HCT116 (cell line): ENCODE measurements at regions of chr15 and their contacts with region 1.

Region 1: GRCh38 chr15:40274350-40275274 is 8.3 kb downstream of the ANKRD63 start:
- DNase-seq: peak; percentile 56
- ATAC-seq: peak; percentile 63
- H3K4me3 ChIP-seq: no peak overlapping the region
- H3K27ac ChIP-seq: no peak overlapping the region
- H3K4me1 ChIP-seq: peaks cover 0 to 3% of the 10 kb centered on the region in 2 experiments; a peak in 1 of 4 replicates
- H3K27me3 ChIP-seq: no peaks in the 10 kb centered on the region
- CTCF ChIP-seq: peak; percentile 100
- POLR2A ChIP-seq: no peak
- RAD21 ChIP-seq: peak; percentile 97

Region 2: DNA sequence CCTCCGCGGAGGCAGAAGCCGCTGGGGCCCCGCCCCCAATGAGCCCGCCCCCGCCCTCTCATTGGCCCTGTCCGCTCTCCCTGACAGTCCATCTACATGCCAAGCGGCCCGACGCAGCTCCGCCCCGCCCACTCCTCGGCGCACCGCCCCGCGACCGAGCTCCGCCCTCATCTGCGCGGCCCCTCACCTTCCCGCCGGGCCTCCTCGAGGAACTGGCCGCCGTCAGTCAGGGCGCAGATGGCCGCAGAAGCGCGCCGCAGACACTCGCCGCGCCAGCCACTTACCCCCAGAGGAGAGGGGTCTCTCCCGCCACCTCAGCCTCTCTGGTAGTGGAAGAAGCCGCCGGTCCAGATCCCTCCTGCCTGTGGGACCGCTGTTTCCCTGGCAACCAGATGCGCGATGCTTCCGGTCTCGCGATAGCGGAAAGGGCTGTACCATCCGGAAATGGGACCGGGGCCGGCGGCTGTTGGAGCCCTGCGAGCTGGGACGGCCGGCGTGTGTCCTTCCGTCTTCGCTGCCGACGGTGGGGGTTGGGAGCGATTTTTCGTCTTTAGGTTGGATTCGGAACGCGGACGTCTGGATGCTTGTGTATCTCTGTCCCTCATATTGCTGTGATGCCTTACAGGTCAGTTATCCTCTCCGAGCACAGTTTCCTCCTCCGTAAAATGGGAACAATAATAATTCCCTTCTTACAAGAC is 492.0 kb before region 1 on chr15 and contains the start of gene FSIP1:
- CTCF ChIA-PET with region 1: interaction called, 7 read pairs
- POLR2A ChIA-PET with region 1: no interaction called
- RAD21 ChIA-PET with region 1: no interaction called
- intact Hi-C with region 1: loop called (anchors 10 kb)
- DNase-seq: peak; percentile 92
- ATAC-seq: peak; percentile 99
- H3K4me3 ChIP-seq: peak within 1 kb of the TSS; percentile 75 to 80
- H3K27ac ChIP-seq: peak within 1 kb of the TSS; percentile 47
- H3K4me1 ChIP-seq: peaks cover 23% of the 10 kb centered on the region in 2 experiments
- H3K27me3 ChIP-seq: no peaks in the 10 kb centered on the region
- CTCF ChIP-seq: no peak
- POLR2A ChIP-seq: no peak
- RAD21 ChIP-seq: no peak
- total RNA-seq, gene FSIP1: 0.42 TPM

Region 3: GRCh38 chr15:40217159-40217824 is 57.3 kb before region 1 on chr15:
- CTCF ChIA-PET with region 1: interaction called, 194 read pairs
- POLR2A ChIA-PET with region 1: interaction called, 4 read pairs
- RAD21 ChIA-PET with region 1: interaction called, 10 to 19 read pairs
- intact Hi-C with region 1: loop called (anchors 1 kb)
- DNase-seq: peak; percentile 68
- ATAC-seq: peak; percentile 99
- H3K4me3 ChIP-seq: no peak overlapping the region
- H3K27ac ChIP-seq: peak overlapping the region; percentile 32; the same call in 1 of the 2 replicates
- H3K4me1 ChIP-seq: 0 out of 4 replicates have a peak, but pooled peaks cover 0 to 3% of the 10 kb centered on the region in 2 experiments
- H3K27me3 ChIP-seq: no peaks in the 10 kb centered on the region
- CTCF ChIP-seq: peak; percentile 65 to 99 (median 86)
- POLR2A ChIP-seq: no peak
- RAD21 ChIP-seq: peak; percentile 91

Region 4: GRCh38 chr15:40285151-40285550 is 10.5 kb after region 1 on chr15:
- CTCF ChIA-PET with region 1: interaction called, 24 read pairs
- POLR2A ChIA-PET with region 1: no interaction called
- RAD21 ChIA-PET with region 1: no interaction called
- intact Hi-C with region 1: no loop called
- DNase-seq: no peak
- ATAC-seq: no peak
- H3K4me3 ChIP-seq: no peak overlapping the region
- H3K27ac ChIP-seq: peak overlapping the region; percentile 15; the same call in 1 of the 2 replicates
- H3K4me1 ChIP-seq: peaks cover 48 to 65% of the 10 kb centered on the region in 2 experiments
- H3K27me3 ChIP-seq: no peaks in the 10 kb centered on the region
- CTCF ChIP-seq: no peak
- POLR2A ChIP-seq: no peak
- RAD21 ChIP-seq: no peak

Region 5: GRCh38 chr15:40307421-40308211 is 33.0 kb after region 1 on chr15 and contains the start of gene PLCB2:
- CTCF ChIA-PET with region 1: interaction called, 134 read pairs
- POLR2A ChIA-PET with region 1: interaction called, 5 read pairs
- RAD21 ChIA-PET with region 1: interaction called, 7 to 18 read pairs
- intact Hi-C with region 1: loop called (anchors 1 kb)
- DNase-seq: no peak
- ATAC-seq: peak; percentile 52
- H3K4me3 ChIP-seq: no peak within 1 kb of the TSS
- H3K27ac ChIP-seq: no peak within 1 kb of the TSS
- H3K4me1 ChIP-seq: peaks cover 2 to 14% of the 10 kb centered on the region in 2 experiments; a peak in 1 of 4 replicates
- H3K27me3 ChIP-seq: 0 out of 2 replicates have a peak, but pooled peaks cover 6% of the 10 kb centered on the region
- CTCF ChIP-seq: peak in 2 of 3 experiments; percentile 30 to 44; a peak in 3 of 6 replicates
- POLR2A ChIP-seq: no peak
- RAD21 ChIP-seq: no peak
- total RNA-seq, gene PLCB2: 2.8 TPM

Region 6: DNA sequence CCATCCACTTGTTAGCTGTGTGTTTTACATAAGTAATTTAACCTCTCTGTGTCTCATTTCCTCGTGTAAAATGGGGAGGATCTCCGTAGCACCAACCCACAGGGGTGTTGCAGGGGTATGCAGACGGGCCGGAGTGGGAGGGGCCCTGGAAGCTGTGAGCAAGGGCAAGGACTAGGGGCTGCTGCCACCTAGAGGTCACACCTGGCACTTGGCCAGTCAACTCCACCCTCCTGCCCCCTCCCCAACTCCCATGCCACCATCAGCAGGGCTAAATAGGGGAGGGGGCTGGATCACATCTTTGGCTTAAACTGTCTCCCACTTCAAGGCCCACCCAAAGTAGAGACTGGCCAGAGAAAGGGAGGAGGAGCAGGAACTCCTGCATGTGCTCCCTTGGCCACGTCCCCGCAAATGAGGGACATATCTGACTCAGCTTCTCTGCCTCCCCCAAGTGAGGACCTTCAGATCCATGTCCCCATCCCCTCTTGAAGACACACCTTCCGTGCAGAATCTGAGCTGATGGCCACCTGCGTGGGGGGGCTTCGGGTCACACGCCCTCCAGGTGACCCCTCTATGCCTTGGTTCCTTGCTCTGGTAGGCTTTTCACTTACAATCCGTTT is 63.5 kb after region 1 on chr15:
- CTCF ChIA-PET with region 1: interaction called, 44 read pairs
- POLR2A ChIA-PET with region 1: interaction called, 4 read pairs
- RAD21 ChIA-PET with region 1: interaction called in 1 of 2 experiments, 4 read pairs
- intact Hi-C with region 1: no loop called
- DNase-seq: peak; percentile 35
- ATAC-seq: peak; percentile 48
- H3K4me3 ChIP-seq: peak overlapping the region in 1 of 2 experiments; percentile 60; a peak in 2 of 4 replicates
- H3K27ac ChIP-seq: peak overlapping the region; percentile 92
- H3K4me1 ChIP-seq: peaks cover 41 to 58% of the 10 kb centered on the region in 2 experiments
- H3K27me3 ChIP-seq: no peaks in the 10 kb centered on the region
- CTCF ChIP-seq: peak in 2 of 3 experiments; percentile 86 to 90; a peak in 4 of 6 replicates
- POLR2A ChIP-seq: no peak
- RAD21 ChIP-seq: no peak